Posterior vena cava (tissue), 2 donors: ENCODE measurements at regions of chr6 and their contacts with region 1.

Region 1: DNA sequence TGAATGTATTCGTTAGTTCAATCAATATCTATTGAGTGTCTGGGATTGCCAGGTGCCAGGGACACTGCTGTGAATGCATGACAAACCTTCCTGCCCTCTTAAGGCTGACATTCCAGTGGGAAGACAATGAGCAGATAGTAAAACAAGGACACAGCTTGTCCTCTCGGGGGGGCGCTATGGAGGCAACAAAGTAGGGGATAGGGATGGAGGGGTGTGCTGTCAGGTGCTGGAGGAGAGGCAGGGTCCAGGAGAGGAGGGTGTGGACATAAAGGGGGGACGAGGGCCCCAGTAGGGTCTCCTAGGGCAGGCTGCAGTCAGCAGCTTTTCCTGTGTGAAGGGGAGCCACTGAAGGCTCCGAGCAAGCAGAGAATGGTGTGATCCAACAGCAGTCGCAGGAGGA is 198.2 kb upstream of the PDE10A start:
- DNase-seq: no peak

Region 2: DNA sequence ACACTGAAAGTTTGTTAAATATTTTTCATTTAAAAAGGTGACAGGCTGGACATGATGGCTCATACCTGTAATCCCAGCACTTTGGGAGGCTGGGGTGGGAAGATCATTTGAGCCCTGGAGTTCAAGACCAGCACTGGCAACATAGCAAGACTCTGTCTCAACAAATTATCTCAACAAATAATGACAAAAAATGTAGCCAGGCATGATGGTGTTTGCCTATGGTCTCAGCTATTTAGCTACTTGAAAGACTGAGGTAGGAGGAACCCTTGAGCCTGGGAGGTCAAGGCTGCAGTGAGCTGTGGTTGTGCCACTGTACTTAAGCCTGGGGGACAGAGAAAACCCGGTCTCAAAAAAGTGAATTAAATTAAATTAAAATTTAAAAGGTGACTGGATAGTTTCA is 495.9 kb before region 1 on chr6:
- intact Hi-C with region 1: loop called in 1 of 2 experiments (anchors 5 kb)
- DNase-seq: no peak

Region 3: DNA sequence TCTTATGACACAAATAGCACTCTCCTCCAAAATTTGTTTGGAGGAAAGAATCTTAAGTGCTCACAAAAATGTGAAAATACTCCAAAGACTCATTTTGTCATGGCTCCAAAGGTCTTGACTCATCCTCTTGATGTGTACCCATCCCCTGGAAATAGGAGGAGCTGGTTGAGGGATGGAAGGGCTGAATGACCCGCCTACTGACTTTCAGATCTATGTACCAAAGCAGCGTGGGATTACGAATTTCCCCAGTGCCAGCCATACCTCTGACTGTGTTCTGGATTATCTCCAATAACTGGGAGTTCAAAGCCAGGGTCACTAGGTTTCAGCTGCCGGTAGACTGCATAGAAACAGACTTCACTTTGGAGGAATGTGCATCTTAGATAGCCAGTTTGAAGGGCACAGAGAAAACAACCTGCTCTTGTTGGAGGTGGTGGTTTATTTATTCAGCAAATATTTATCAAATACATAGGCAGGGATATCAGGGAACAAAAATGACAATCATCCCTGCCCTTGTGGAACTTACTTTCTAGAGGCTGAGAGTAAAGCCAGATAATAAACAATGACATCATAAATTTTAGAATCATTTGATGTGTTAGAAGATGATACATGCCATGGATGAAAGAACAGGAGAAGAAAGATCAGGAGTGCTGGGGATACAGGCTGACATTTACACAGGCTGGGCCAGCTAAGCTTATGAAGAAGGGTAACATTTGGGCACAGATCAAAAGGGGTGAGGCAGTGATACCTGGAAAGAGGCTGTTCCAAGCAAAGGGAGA is 59.9 kb after region 1 on chr6:
- intact Hi-C with region 1: no loop called
- DNase-seq: no peak